CD8-positive, alpha-beta T cell (primary cell): ENCODE measurements at regions of chr1 and their contacts with region 1.

Region 1: GRCh38 chr1:223811634-223812415 is 33.9 kb downstream of the TP53BP2 start:
- DNase-seq: peak in 2 of 9 experiments; percentile 52 to 64
- ATAC-seq: peak; percentile 74
- H3K4me3 ChIP-seq: no peak overlapping the region
- H3K4me3 Mint-ChIP-seq: no peak overlapping the region
- H3K27ac ChIP-seq: no peak overlapping the region
- H3K27ac Mint-ChIP-seq: no peak overlapping the region
- H3K4me1 ChIP-seq: peaks cover 6% of the 10 kb centered on the region
- H3K4me1 Mint-ChIP-seq: peaks cover 25% of the 10 kb centered on the region
- H3K27me3 ChIP-seq: no peaks in the 10 kb centered on the region
- H3K27me3 Mint-ChIP-seq: no peaks in the 10 kb centered on the region
- CTCF ChIP-seq: peak; percentile 73

Region 2: DNA sequence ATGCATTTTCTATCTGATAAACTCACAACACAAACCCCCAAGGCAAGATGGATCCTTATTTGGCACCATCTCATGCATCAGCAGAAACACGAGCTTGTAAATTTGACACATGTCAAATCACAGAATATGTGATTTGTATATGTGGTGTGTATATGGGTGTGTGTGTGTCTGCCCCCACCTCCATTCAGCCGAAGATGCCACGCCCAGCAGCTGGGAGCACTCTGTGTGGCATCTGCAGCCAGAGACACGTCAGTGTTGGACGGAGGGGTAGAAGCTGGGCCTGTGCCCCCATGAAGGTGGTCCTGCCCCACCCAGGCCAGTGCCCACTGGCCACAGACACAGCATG is 254.7 kb before region 1 on chr1:
- CTCF ChIA-PET with region 1: no interaction called
- POLR2A ChIA-PET with region 1: no interaction called
- intact Hi-C with region 1: no loop called
- DNase-seq: no peak
- ATAC-seq: no peak
- H3K4me3 ChIP-seq: no peak overlapping the region
- H3K4me3 Mint-ChIP-seq: no peak overlapping the region
- H3K27ac ChIP-seq: no peak overlapping the region
- H3K27ac Mint-ChIP-seq: no peak overlapping the region
- H3K4me1 ChIP-seq: no peaks in the 10 kb centered on the region
- H3K4me1 Mint-ChIP-seq: no peaks in the 10 kb centered on the region
- H3K27me3 ChIP-seq: no peaks in the 10 kb centered on the region
- H3K27me3 Mint-ChIP-seq: no peaks in the 10 kb centered on the region
- CTCF ChIP-seq: no peak

Region 3: GRCh38 chr1:223825767-223826748 is 14.2 kb after region 1 on chr1:
- CTCF ChIA-PET with region 1: interaction called, 10 read pairs
- POLR2A ChIA-PET with region 1: interaction called, 3 read pairs
- intact Hi-C with region 1: loop called in 1 of 2 experiments (anchors 2 kb)
- DNase-seq: peak in 1 of 9 experiments; percentile 24
- ATAC-seq: no peak
- H3K4me3 ChIP-seq: no peak overlapping the region
- H3K4me3 Mint-ChIP-seq: peak overlapping the region; percentile 22
- H3K27ac ChIP-seq: no peak overlapping the region
- H3K27ac Mint-ChIP-seq: peak overlapping the region; percentile 16
- H3K4me1 ChIP-seq: peaks cover 24% of the 10 kb centered on the region
- H3K4me1 Mint-ChIP-seq: peaks cover 59% of the 10 kb centered on the region
- H3K27me3 ChIP-seq: no peaks in the 10 kb centered on the region
- H3K27me3 Mint-ChIP-seq: no peaks in the 10 kb centered on the region
- CTCF ChIP-seq: no peak

Region 4: GRCh38 chr1:224051086-224051406 is 239.2 kb after region 1 on chr1:
- CTCF ChIA-PET with region 1: interaction called, 14 read pairs
- POLR2A ChIA-PET with region 1: no interaction called
- intact Hi-C with region 1: loop called in 1 of 2 experiments (anchors 2 kb)
- DNase-seq: no peak
- ATAC-seq: no peak
- H3K4me3 ChIP-seq: no peak overlapping the region
- H3K4me3 Mint-ChIP-seq: no peak overlapping the region
- H3K27ac ChIP-seq: no peak overlapping the region
- H3K27ac Mint-ChIP-seq: no peak overlapping the region
- H3K4me1 ChIP-seq: no peaks in the 10 kb centered on the region
- H3K4me1 Mint-ChIP-seq: peaks cover 2% of the 10 kb centered on the region
- H3K27me3 ChIP-seq: no peaks in the 10 kb centered on the region
- H3K27me3 Mint-ChIP-seq: peaks cover 3% of the 10 kb centered on the region
- CTCF ChIP-seq: no peak